IMR-90 (cell line): ENCODE measurements at regions of chr6 and their contacts with region 1.

Region 1: DNA sequence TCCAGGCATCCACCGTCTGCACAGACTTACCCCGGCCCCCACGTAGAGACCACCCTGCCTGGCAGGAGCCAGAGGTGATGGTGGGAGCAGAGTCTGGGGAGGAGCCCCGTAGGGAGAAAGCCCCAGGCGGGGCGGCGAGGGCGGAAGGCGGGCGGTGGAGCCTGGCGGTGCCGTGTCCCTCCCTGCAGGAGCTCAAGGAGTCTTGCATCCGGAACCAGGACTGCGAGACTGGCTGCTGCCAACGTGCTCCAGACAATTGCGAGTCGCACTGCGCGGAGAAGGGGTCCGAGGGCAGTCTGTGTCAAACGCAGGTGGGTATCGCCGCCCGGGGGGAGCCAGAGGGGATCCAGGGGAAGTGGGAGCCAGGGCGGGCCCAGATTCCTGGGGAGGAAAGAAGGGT is 6.0 kb downstream of the CLPSL1 start:
- DNase-seq: no peak
- ATAC-seq: no peak
- H3K4me3 ChIP-seq: no peak overlapping the region
- H3K27ac ChIP-seq: no peak overlapping the region
- H3K4me1 ChIP-seq: no peaks in the 10 kb centered on the region
- H3K27me3 ChIP-seq: peaks cover 52% of the 10 kb centered on the region
- CTCF ChIP-seq: no peak
- POLR2A ChIP-seq: no peak
- RAD21 ChIP-seq: no peak

Region 2: DNA sequence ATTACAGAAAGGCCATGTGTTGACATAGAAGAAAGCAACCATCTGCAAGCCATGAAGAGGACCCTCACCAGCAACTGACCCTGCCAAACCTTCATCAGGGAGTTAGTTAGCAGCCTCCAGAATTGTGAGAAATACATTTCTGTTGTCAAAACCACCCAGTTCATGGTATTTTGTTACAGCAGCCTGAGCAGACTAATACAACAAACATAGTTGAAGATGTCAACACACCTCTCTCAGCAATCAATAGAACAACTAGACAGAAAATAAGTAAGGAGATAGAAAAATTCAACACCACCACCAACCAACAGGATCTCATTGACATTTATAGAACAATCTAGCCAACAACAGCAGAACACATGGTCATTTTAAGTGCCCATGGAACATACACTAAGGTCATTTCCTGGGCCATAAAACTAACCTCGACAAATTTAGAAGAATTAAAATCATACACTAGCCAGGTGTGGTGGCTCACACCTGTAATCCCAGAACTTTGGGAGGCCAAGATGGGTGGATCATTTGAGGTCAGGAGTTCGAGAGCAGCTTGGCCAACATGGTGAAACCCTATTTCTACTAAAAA is 678.4 kb before region 1 on chr6:
- CTCF ChIA-PET with region 1: no interaction called
- POLR2A ChIA-PET with region 1: no interaction called
- dilution Hi-C with region 1: no loop called
- in situ Hi-C with region 1: no loop called
- intact Hi-C with region 1: no loop called
- DNase-seq: no peak
- ATAC-seq: no peak
- H3K4me3 ChIP-seq: no peak overlapping the region
- H3K27ac ChIP-seq: no peak overlapping the region
- H3K4me1 ChIP-seq: no peaks in the 10 kb centered on the region
- H3K27me3 ChIP-seq: peaks cover 3% of the 10 kb centered on the region
- CTCF ChIP-seq: no peak
- POLR2A ChIP-seq: no peak
- RAD21 ChIP-seq: no peak

Region 3: DNA sequence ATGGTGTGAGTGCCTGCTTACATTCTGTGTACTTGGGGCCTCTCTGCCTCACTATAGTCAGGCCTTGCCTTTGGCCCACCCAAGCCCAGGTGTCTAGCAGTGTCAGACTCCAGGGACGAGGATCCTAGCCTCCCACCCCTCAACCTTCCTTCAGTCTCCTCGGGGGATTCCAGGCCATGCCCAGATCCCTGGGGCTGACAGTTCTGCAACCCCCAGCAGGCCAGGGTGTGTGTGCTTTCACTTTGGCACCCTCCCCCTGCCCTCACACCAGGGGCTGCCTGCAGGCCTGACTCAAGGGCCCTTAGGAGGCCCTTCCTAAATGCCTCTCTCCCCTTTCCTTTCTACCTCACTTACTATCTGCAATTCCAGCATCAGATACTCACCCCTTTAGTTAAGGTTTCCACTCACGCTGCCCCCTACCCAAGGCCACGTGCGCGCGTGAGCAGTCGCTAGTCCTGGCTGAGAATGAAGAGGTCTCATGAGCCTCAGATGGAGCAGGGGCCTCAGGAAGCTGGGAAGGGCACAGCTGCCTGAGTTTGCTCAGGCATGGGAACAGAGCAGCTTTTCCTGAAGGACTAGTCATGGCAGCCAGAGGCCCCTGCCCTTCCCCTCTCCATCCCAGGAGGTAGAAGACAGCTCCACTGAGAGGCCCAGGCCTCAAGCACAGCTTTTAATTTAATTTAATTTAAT is 11.2 kb after region 1 on chr6:
- CTCF ChIA-PET with region 1: interaction called, 7 read pairs
- POLR2A ChIA-PET with region 1: no interaction called
- dilution Hi-C with region 1: no loop called
- in situ Hi-C with region 1: no loop called
- intact Hi-C with region 1: loop called (anchors 1 kb)
- DNase-seq: no peak
- ATAC-seq: no peak
- H3K4me3 ChIP-seq: no peak overlapping the region
- H3K27ac ChIP-seq: no peak overlapping the region
- H3K4me1 ChIP-seq: no peaks in the 10 kb centered on the region
- H3K27me3 ChIP-seq: peaks cover 41% of the 10 kb centered on the region
- CTCF ChIP-seq: no peak
- POLR2A ChIP-seq: no peak
- RAD21 ChIP-seq: no peak